ENCODE measurements at regions of chr12 and their contacts with region 1.

Region 1: DNA sequence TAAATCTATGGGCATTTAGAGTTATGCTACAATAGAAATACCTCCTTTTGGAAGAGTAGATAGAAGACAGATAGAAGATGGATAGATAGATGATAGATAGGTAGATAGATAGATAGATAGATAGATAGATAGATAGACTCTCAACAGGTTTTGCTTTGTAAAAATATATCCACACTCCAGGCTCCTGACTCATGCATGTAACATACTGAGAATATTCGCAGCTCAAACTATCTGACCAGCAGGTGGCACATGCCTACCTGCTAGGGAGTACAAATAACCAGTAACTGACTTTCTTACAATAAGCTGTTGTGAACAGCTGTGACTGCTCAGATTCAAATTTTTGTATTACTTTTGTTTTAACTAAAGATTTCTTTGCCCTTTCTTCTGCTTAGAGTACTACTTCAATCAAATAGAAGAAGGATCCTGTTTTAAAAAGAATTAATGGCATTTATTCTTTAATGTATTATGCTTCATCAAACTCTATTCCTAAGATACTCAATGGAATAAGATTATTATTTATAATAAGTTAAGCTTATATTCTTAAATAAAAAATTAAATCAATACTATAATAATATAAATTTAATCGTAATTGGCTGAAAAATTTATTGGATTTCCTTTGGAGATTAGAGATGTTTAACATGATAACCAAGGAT is 15.8 kb upstream of the CPNE8 start:
- DNase-seq: no peak
- H3K4me3 Mint-ChIP-seq: no peak overlapping the region
- H3K27ac Mint-ChIP-seq: no peak overlapping the region
- H3K4me1 Mint-ChIP-seq: no peaks in the 10 kb centered on the region
- H3K27me3 Mint-ChIP-seq: peaks cover 2% of the 10 kb centered on the region

Region 2: GRCh38 chr12:38324896-38325295 is 596.3 kb before region 1 on chr12:
- intact Hi-C with region 1: loop called (anchors 5 kb)
- DNase-seq: no peak
- H3K4me3 Mint-ChIP-seq: no peak overlapping the region
- H3K27ac Mint-ChIP-seq: no peak overlapping the region
- H3K4me1 Mint-ChIP-seq: no peaks in the 10 kb centered on the region
- H3K27me3 Mint-ChIP-seq: no peaks in the 10 kb centered on the region

Measured in activated T-helper 1 cell treated with anti-CD3 and anti-CD28 coated beads, Interleukin-12 subunit alpha, Interleukin-12 subunit beta, Interleukin-2, Interleukin-4 antibody, amounts not matched to agents 30 ng/mL and 10 ng/mL and 1 ng/mL, durations not matched to agents 14 hours and 24 hours and 36 hours (primary cell).